ENCODE measurements at regions of chr6 and their contacts with region 1.

Region 1: DNA sequence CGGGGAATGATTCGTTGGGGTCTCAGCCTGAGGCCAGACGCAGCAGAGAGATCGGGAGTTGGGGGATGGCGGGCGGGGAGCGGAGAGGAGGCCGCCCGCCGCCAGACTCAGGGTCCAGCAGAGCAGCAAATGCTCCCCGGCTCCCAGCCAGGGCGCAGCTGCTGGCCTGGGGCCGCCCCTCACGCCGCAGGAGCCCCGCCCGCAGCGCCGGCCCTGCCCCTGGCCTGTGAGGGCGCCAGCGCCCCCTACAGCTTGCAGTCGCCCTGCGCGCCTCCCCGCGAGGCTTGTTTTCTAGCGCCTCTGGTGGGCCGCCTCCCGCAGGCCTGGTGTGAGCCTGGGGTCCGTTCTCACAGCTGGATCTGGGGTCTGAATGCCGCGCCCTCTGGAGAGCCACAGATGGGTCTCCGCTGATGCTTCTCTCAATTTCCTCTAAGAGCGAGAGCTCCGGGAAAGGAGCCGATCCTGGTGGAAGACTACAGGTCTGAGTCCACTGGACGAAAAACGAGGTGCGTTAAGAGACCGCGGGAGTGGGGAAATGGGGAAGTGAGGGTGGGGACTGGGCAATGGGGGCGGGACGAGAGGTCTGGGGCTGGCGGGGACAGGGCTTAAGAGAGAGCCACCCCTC is 29.9 kb downstream of the TRIM38 start:
- DNase-seq: peak; percentile 92
- H3K4me3 Mint-ChIP-seq: peak overlapping the region; percentile 94
- H3K27ac Mint-ChIP-seq: peak overlapping the region; percentile 93
- H3K4me1 Mint-ChIP-seq: peaks cover 38% of the 10 kb centered on the region
- H3K27me3 Mint-ChIP-seq: no peaks in the 10 kb centered on the region

Region 2: GRCh38 chr6:25971187-25971811 is 21.2 kb before region 1 on chr6:
- CTCF ChIA-PET with region 1: interaction called, 22 read pairs
- POLR2A ChIA-PET with region 1: interaction called, 4 read pairs
- DNase-seq: no peak
- H3K4me3 Mint-ChIP-seq: no peak overlapping the region
- H3K27ac Mint-ChIP-seq: no peak overlapping the region
- H3K4me1 Mint-ChIP-seq: peaks cover 62% of the 10 kb centered on the region
- H3K27me3 Mint-ChIP-seq: no peaks in the 10 kb centered on the region

Region 3: DNA sequence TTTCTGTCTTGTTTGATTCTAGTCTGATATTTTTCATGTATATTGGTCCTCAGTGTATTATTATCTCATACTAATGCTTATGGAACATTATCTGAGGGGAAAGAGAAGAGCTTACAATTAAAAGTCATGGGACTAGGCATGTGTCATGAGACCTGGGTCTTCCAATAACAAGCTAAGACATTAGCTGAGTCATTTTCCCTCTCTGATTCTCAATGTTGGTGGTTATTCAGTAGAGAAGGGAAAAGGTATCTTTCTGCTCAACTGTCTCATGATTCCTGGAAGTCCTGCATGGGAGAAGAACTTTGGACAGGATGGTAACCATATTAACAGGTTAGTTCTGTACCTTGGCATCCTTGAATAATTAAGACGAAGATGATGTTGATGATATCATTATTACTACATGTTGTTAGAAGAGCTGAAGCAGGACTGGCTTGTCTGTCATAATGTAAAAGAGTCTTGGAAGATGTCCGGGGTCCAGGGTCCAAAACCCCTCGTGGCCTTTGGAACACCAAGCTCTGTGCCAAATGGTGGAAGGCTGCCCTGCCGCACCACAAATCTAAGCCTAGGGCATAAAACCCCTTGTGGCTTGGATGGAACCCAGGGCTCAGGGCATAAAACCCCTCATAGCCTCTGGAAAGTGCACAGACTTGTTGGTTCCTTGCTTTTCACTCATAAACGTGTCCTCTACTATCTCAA is 10.8 kb before region 1 on chr6:
- CTCF ChIA-PET with region 1: interaction called, 23 read pairs
- POLR2A ChIA-PET with region 1: no interaction called
- DNase-seq: no peak
- H3K4me3 Mint-ChIP-seq: no peak overlapping the region
- H3K27ac Mint-ChIP-seq: no peak overlapping the region
- H3K4me1 Mint-ChIP-seq: peaks cover 7% of the 10 kb centered on the region
- H3K27me3 Mint-ChIP-seq: no peaks in the 10 kb centered on the region

Region 4: DNA sequence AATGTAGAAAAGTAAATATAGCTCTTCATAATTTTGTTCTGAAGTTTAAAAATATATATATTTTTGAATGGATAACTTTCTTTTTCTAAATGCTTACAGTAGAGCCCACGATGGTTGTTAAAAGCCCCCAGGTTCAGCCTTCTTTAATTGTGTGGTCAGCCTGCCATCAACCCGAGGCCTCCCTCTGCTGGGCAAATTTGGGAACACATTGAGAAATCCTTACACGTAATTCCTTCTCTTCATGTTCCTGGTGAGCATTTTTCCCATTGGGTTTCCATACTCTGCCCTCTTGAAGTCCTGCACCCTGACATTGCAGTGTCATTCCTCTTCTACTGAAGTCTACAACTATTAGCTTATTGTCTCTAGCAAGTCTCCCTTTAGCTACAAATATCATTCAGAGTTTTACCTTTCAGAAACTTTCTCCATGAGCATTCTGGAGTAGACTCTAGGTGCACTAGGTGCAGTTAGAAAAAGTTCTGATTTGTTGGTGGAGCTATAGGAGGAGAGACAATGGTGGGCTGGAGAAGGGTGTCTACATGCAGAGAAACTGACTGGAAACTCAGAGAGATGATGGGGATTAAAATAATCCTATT is 10.7 kb after region 1 on chr6:
- CTCF ChIA-PET with region 1: interaction called, 157 read pairs
- POLR2A ChIA-PET with region 1: no interaction called
- DNase-seq: peak; percentile 55
- H3K4me3 Mint-ChIP-seq: no peak overlapping the region
- H3K27ac Mint-ChIP-seq: no peak overlapping the region
- H3K4me1 Mint-ChIP-seq: peaks cover 12% of the 10 kb centered on the region
- H3K27me3 Mint-ChIP-seq: no peaks in the 10 kb centered on the region